ENCODE measurements at regions of chr2 and their contacts with region 1.

Region 1: DNA sequence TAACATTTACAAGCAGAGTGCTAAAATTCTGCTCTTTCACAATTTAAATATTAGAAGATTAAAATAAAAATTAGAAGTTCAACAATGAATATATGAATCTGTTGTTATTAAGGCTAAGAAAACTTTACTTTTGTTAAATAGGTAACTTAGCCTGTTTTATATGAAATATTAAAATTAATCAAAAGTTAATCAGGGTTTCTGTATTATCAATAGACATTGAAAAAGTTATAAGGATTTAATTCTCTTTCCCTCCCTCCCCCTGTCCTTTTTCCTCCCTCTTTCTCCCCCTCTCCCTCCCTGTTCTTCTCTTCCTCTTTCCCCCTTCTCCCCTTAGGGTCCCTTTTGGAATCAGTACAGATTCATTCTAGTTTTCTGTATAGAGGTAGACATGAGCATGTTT is 12.1 kb downstream of the BBS5 start:
- DNase-seq: no peak
- H3K4me3 ChIP-seq: no peak overlapping the region
- H3K27ac ChIP-seq: no peak overlapping the region
- H3K4me1 ChIP-seq: no peaks in the 10 kb centered on the region
- H3K27me3 ChIP-seq: no peaks in the 10 kb centered on the region
- CTCF ChIP-seq: no peak
- EP300 ChIP-seq: no peak
- RAD21 ChIP-seq: no peak

Region 2: GRCh38 chr2:169479257-169480078 is 11.9 kb before region 1 on chr2 and contains the start of gene BBS5:
- CTCF ChIA-PET with region 1: interaction called, 15 read pairs
- POLR2A ChIA-PET with region 1: no interaction called
- DNase-seq: peak; percentile 86
- H3K4me3 ChIP-seq: peak within 1 kb of the TSS; percentile 79 to 94
- H3K27ac ChIP-seq: peak within 1 kb of the TSS; percentile 51 to 66; a peak in 3 of 4 replicates
- H3K4me1 ChIP-seq: no peaks in the 10 kb centered on the region; a peak in 1 of 4 replicates
- H3K27me3 ChIP-seq: no peaks in the 10 kb centered on the region
- CTCF ChIP-seq: peak; percentile 65
- EP300 ChIP-seq: no peak; a peak in 1 of 4 replicates
- RAD21 ChIP-seq: peak; percentile 34; the same call in 1 of the 2 replicates
- polyA plus RNA-seq, gene BBS5: 3.8 TPM in 2 replicates

Measured in SK-N-SH (cell line).